ENCODE measurements at regions of chr5 and their contacts with region 1.

Region 1: GRCh38 chr5:113059232-113060040 is 82.8 kb downstream of the DCP2 start:
- DNase-seq: no peak
- H3K4me3 Mint-ChIP-seq: no peak overlapping the region
- H3K27ac Mint-ChIP-seq: no peak overlapping the region
- H3K4me1 Mint-ChIP-seq: peaks cover 21% of the 10 kb centered on the region
- H3K27me3 Mint-ChIP-seq: peaks cover 4% of the 10 kb centered on the region

Region 2: DNA sequence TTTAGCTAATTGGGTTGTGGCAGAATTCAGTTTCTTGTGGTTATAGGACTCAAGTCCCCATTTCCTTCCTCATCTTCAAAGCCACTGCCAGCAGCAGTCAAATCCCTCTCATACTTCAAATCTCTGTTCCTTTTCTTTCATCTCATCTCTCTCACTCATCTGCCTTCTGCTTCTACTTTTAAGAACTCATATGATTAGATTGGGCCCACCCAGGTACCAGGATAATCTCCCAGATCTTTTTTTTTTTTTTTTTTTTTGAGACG is 129.4 kb before region 1 on chr5:
- intact Hi-C with region 1: no loop called
- DNase-seq: no peak
- H3K4me3 Mint-ChIP-seq: peak overlapping the region; percentile 34
- H3K27ac Mint-ChIP-seq: peak overlapping the region; percentile 51
- H3K4me1 Mint-ChIP-seq: peaks cover 48% of the 10 kb centered on the region
- H3K27me3 Mint-ChIP-seq: peaks cover 2% of the 10 kb centered on the region

Region 3: DNA sequence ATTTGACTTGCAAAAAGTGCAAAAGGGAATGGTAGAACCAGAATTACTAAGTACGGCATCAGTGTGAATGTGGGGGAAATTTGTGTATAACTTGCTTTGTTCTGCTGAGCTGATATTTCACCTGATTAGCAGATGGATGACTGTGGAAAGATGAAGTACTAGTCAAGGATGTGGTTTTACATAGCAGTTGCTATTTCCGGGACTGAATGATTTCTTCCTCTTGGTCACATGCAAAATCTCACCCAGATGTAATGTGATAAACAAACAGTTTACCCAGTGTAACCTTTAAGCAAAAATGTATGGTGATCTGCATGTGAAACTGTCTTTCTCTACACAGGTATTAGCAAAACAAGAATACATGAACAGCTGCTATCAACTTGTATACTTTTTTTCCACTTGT is 36.8 kb before region 1 on chr5:
- intact Hi-C with region 1: loop called (anchors 2 kb)
- DNase-seq: peak; percentile 27
- H3K4me3 Mint-ChIP-seq: peak overlapping the region; percentile 43
- H3K27ac Mint-ChIP-seq: peak overlapping the region; percentile 61
- H3K4me1 Mint-ChIP-seq: peaks cover 62% of the 10 kb centered on the region
- H3K27me3 Mint-ChIP-seq: no peaks in the 10 kb centered on the region

Region 4: DNA sequence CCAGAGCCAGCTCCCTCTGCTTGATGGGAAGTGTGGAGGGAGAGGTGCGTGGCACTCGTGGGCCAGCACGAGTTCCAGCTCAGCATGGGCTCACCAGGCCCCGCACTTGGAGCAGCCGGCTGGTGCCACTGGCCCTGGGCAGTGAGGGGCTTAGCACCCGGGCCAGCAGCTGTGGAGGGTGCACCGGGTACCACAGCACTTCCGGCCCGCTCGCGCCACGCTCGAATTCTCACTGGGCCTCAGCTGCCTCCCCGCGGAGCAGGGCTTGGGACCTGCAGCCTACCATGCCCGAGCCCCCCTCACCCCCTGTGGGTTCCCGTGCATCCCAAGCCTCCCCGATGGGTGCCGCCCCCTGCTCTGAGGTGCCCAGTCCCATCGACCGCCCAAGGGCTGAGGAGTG is 15.6 kb after region 1 on chr5:
- intact Hi-C with region 1: no loop called
- DNase-seq: no peak
- H3K4me3 Mint-ChIP-seq: no peak overlapping the region
- H3K27ac Mint-ChIP-seq: no peak overlapping the region
- H3K4me1 Mint-ChIP-seq: no peaks in the 10 kb centered on the region
- H3K27me3 Mint-ChIP-seq: peaks cover 8% of the 10 kb centered on the region

Region 5: GRCh38 chr5:113294311-113295110 is 235.1 kb after region 1 on chr5:
- intact Hi-C with region 1: loop called (anchors 5 kb)
- DNase-seq: peak; percentile 62
- H3K4me3 Mint-ChIP-seq: peak overlapping the region; percentile 89
- H3K27ac Mint-ChIP-seq: peak overlapping the region; percentile 8
- H3K4me1 Mint-ChIP-seq: peaks cover 18% of the 10 kb centered on the region
- H3K27me3 Mint-ChIP-seq: peaks cover 69% of the 10 kb centered on the region

Measured in activated T-helper 1 cell treated with anti-CD3 and anti-CD28 coated beads, Interleukin-12 subunit alpha, Interleukin-12 subunit beta, Interleukin-2, Interleukin-4 antibody, amounts not matched to agents 30 ng/mL and 10 ng/mL and 1 ng/mL, durations not matched to agents 14 hours and 24 hours and 36 hours (primary cell).